Naive thymus-derived CD4-positive, alpha-beta T cell (primary cell): ENCODE measurements at regions of chr16 and their contacts with region 1.

Region 1: DNA sequence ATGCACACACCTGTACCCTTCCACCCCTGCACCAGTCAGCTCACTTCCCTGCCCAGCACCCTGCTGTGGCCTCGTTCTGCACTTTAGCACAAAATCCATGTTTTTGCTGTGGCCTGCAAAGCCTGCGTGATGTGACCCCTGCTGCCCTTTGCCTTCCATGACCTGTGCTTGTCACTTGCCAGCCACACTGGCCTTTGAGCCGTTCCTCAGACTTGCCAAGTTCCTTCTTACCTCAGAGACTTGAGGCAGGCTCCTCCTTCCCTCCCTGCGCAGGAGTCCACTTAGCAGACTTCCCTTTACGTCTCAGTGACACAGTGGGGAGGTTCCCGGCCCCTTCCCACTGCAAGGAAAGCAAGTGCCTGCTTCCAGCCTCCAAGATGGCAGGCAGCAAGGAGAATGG is 134.7 kb downstream of the SNX29 start:
- DNase-seq: no peak
- ATAC-seq: no peak
- H3K4me3 ChIP-seq: no peak overlapping the region
- H3K4me3 Mint-ChIP-seq: no peak overlapping the region
- H3K27ac ChIP-seq: no peak overlapping the region
- H3K27ac Mint-ChIP-seq: peak overlapping the region in 1 of 9 donors; percentile 10
- H3K4me1 ChIP-seq: no peaks in the 10 kb centered on the region
- H3K4me1 Mint-ChIP-seq: peaks cover 0 to 15% (median 0%) of the 10 kb centered on the region in 7 donors
- H3K27me3 ChIP-seq: no peaks in the 10 kb centered on the region
- H3K27me3 Mint-ChIP-seq: no peaks in the 10 kb centered on the region

Region 2: GRCh38 chr16:12095275-12096156 is 15.7 kb before region 1 on chr16:
- CTCF ChIA-PET with region 1: interaction called, 13 read pairs
- POLR2A ChIA-PET with region 1: no interaction called
- intact Hi-C with region 1: no loop called
- DNase-seq: peak; percentile 27 to 70 (median 57)
- ATAC-seq: peak; percentile 76
- H3K4me3 ChIP-seq: peak overlapping the region; percentile 31
- H3K4me3 Mint-ChIP-seq: peak overlapping the region; percentile 70 to 86 (median 82)
- H3K27ac ChIP-seq: no peak overlapping the region
- H3K27ac Mint-ChIP-seq: peak overlapping the region in 7 of 9 donors; percentile 25 to 81 (median 63)
- H3K4me1 ChIP-seq: peaks cover 0 to 2% of the 10 kb centered on the region in 2 donors
- H3K4me1 Mint-ChIP-seq: peaks cover 7 to 52% (median 38%) of the 10 kb centered on the region in 7 donors
- H3K27me3 ChIP-seq: no peaks in the 10 kb centered on the region
- H3K27me3 Mint-ChIP-seq: no peaks in the 10 kb centered on the region

Region 3: DNA sequence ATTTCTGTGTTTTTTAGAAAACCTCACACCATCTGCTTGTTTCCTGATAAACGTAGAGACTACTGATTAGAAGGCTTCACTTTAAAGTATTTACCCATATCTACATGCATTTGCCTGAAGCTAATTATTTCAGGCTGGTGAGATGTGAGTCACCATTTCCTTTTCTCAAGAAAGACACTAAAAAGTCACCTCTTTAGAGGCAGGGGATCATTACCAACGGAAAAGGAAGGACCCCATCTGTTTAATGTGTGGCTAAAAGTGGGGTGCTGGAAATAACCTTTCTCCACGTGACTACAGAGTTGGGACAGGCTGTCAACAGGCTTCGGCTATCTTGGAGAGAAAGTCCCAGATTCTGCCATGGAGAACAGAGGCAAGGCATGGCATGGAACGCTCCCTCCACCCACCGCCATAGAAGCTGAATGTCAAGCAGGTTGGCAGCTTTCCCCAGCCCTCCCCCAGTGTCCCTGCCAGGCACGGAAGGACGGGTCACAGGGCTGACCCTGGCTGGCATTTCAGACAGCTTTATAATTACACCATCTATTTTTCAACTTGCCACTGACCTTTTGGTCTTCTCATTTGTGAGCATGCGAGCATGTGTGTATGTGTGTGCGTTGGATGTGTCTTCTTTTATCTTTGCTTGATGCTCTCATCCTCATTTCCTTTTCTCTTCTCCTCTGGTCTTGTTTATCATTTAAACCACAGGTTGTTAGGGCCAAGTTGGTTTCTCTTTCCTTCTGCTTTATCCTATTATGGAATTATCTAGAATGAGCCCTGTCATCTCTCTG is 535.5 kb after region 1 on chr16:
- CTCF ChIA-PET with region 1: no interaction called
- POLR2A ChIA-PET with region 1: no interaction called
- intact Hi-C with region 1: no loop called
- DNase-seq: peak in 5 of 9 donors; percentile 13 to 39 (median 31)
- ATAC-seq: peak; percentile 37
- H3K4me3 ChIP-seq: no peak overlapping the region
- H3K4me3 Mint-ChIP-seq: peak overlapping the region in 6 of 10 donors; percentile 20 to 63 (median 34)
- H3K27ac ChIP-seq: peak overlapping the region; percentile 1
- H3K27ac Mint-ChIP-seq: peak overlapping the region in 3 of 9 donors; percentile 11 to 95 (median 56)
- H3K4me1 ChIP-seq: peaks cover 0 to 9% of the 10 kb centered on the region in 2 donors
- H3K4me1 Mint-ChIP-seq: peaks cover 13 to 30% (median 20%) of the 10 kb centered on the region in 7 donors
- H3K27me3 ChIP-seq: no peaks in the 10 kb centered on the region
- H3K27me3 Mint-ChIP-seq: peaks cover 0 to 5% (median 0%) of the 10 kb centered on the region in 5 donors